ENCODE measurements at regions of chr15 and their contacts with region 1.

Region 1: GRCh38 chr15:100349696-100350433 is 8.1 kb upstream of the ADAMTS17 start:
- DNase-seq: peak; percentile 11
- ATAC-seq: peak; percentile 98
- H3K4me3 ChIP-seq: peak overlapping the region; percentile 62; the same call in 1 of the 2 replicates
- H3K27ac ChIP-seq: 0 out of 2 replicates have a peak overlapping the region, but pooled peaks have one; percentile 24
- H3K4me1 ChIP-seq: no peaks in the 10 kb centered on the region
- H3K27me3 ChIP-seq: no peaks in the 10 kb centered on the region
- CTCF ChIP-seq: peak; percentile 49 to 72 (median 68)
- EP300 ChIP-seq: no peak
- POLR2A ChIP-seq: no peak
- RAD21 ChIP-seq: peak; percentile 43

Region 2: GRCh38 chr15:100224206-100225185 is 125.4 kb before region 1 on chr15:
- CTCF ChIA-PET with region 1: no interaction called
- POLR2A ChIA-PET with region 1: no interaction called
- RAD21 ChIA-PET with region 1: no interaction called
- SMC1A ChIA-PET with region 1: no interaction called
- in situ Hi-C with region 1: no loop called
- intact Hi-C with region 1: no loop called
- DNase-seq: no peak
- ATAC-seq: no peak
- H3K4me3 ChIP-seq: no peak overlapping the region
- H3K27ac ChIP-seq: no peak overlapping the region
- H3K4me1 ChIP-seq: no peaks in the 10 kb centered on the region
- H3K27me3 ChIP-seq: no peaks in the 10 kb centered on the region
- CTCF ChIP-seq: no peak
- EP300 ChIP-seq: no peak
- POLR2A ChIP-seq: no peak
- RAD21 ChIP-seq: no peak

Region 3: GRCh38 chr15:100290919-100291495 is 58.9 kb before region 1 on chr15:
- CTCF ChIA-PET with region 1: no interaction called
- POLR2A ChIA-PET with region 1: no interaction called
- RAD21 ChIA-PET with region 1: no interaction called
- SMC1A ChIA-PET with region 1: no interaction called
- in situ Hi-C with region 1: no loop called
- intact Hi-C with region 1: no loop called
- DNase-seq: no peak
- ATAC-seq: no peak
- H3K4me3 ChIP-seq: no peak overlapping the region
- H3K27ac ChIP-seq: no peak overlapping the region
- H3K4me1 ChIP-seq: no peaks in the 10 kb centered on the region
- H3K27me3 ChIP-seq: no peaks in the 10 kb centered on the region
- CTCF ChIP-seq: no peak
- EP300 ChIP-seq: no peak
- POLR2A ChIP-seq: no peak
- RAD21 ChIP-seq: no peak

Region 4: GRCh38 chr15:100338971-100339444 is 10.9 kb before region 1 on chr15:
- CTCF ChIA-PET with region 1: interaction called, 17 read pairs
- POLR2A ChIA-PET with region 1: no interaction called
- RAD21 ChIA-PET with region 1: no interaction called
- SMC1A ChIA-PET with region 1: no interaction called
- in situ Hi-C with region 1: no loop called
- intact Hi-C with region 1: no loop called
- DNase-seq: no peak
- ATAC-seq: 0 out of 3 replicates have a peak, but pooled peaks have one; percentile 37
- H3K4me3 ChIP-seq: no peak overlapping the region
- H3K27ac ChIP-seq: no peak overlapping the region
- H3K4me1 ChIP-seq: no peaks in the 10 kb centered on the region
- H3K27me3 ChIP-seq: peaks cover 0 to 3% of the 10 kb centered on the region in 2 experiments; a peak in 1 of 4 replicates
- CTCF ChIP-seq: peak; percentile 34 to 40 (median 37); a peak in 4 of 6 replicates
- EP300 ChIP-seq: no peak
- POLR2A ChIP-seq: no peak
- RAD21 ChIP-seq: peak; percentile 49

Region 5: DNA sequence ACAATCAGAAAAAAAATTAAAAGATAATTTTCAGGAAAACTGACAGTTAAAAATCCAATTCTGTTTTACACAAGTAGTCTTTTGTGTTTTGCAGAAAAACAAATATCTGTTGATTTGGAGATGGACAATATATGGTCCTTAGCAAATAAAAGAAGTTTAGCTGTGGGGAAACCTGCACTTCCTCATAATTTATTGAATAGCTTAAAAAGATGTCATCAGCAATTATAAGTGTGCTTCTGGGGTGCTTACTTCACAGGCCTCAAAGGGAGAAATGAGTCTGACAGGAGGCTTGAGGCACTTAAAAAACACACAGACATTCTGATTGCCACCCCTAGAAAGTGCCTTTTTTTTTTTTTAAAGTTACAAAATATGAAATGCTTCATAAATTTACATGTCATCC is 210.5 kb after region 1 on chr15:
- CTCF ChIA-PET with region 1: no interaction called
- POLR2A ChIA-PET with region 1: no interaction called
- RAD21 ChIA-PET with region 1: no interaction called
- SMC1A ChIA-PET with region 1: no interaction called
- in situ Hi-C with region 1: loop called (anchors 5 kb)
- intact Hi-C with region 1: no loop called
- DNase-seq: no peak
- ATAC-seq: no peak
- H3K4me3 ChIP-seq: no peak overlapping the region
- H3K27ac ChIP-seq: no peak overlapping the region
- H3K4me1 ChIP-seq: no peaks in the 10 kb centered on the region
- H3K27me3 ChIP-seq: no peaks in the 10 kb centered on the region
- CTCF ChIP-seq: no peak
- EP300 ChIP-seq: no peak
- POLR2A ChIP-seq: no peak
- RAD21 ChIP-seq: no peak

Region 6: GRCh38 chr15:100572362-100572983 is 222.6 kb after region 1 on chr15:
- CTCF ChIA-PET with region 1: interaction called, 23 read pairs
- POLR2A ChIA-PET with region 1: no interaction called
- RAD21 ChIA-PET with region 1: interaction called, 3 read pairs
- SMC1A ChIA-PET with region 1: no interaction called
- in situ Hi-C with region 1: no loop called
- intact Hi-C with region 1: loop called (anchors 10 kb)
- DNase-seq: no peak
- ATAC-seq: no peak
- H3K4me3 ChIP-seq: no peak overlapping the region
- H3K27ac ChIP-seq: no peak overlapping the region
- H3K4me1 ChIP-seq: peaks cover 9% of the 10 kb centered on the region
- H3K27me3 ChIP-seq: no peaks in the 10 kb centered on the region
- CTCF ChIP-seq: peak in 2 of 3 experiments; percentile 1 to 32; a peak in 2 of 6 replicates
- EP300 ChIP-seq: no peak
- POLR2A ChIP-seq: no peak
- RAD21 ChIP-seq: no peak